MCF 10A (cell line): ENCODE measurements at regions of chr2 and their contacts with region 1.

Region 1: DNA sequence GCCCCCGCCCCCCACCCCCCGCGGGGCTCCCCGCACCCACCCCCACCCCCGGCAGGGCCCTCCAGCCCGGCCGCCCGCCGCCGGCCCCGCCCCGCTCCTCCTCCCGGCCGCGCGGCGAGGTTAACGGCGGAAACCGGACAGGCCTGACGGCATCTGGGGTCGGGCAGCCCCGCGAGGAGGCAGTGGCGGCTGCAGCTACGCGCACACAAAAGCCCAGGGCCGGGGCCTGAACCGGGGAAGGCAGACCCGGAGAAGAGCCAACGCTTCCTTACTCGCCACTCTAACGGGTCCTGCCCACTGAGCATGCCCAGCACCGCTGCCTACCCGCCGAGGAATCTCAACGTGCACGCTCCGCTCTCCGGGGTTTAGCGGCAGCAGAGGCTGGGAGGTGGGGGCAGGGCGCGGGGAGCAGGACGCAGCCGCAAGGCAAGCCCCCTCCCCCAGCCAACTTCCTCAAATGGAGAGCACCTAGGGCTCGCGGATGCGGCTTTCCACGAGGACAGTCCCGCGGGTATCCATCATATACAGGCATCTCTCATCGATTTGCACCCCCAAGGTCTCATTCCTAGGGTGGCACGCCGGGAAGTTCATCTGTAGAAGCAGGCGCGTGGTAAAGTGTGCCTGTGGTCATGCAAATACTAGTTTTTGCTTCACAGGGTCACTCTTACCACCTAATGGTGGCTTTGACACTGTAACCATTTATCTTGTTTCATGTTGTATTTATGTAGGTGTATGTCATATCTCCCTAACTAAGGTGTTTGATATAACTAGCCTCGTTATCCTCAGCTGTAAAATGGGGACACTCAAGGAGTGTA is at the start of gene MEMO1:
- DNase-seq: peak; percentile 92
- H3K4me3 Mint-ChIP-seq: peak within 1 kb of the TSS; percentile 86
- H3K27ac Mint-ChIP-seq: peak within 1 kb of the TSS; percentile 67
- H3K4me1 Mint-ChIP-seq: peaks cover 20% of the 10 kb centered on the region
- H3K27me3 Mint-ChIP-seq: no peaks in the 10 kb centered on the region
- CTCF ChIP-seq: no peak
- total RNA-seq, gene MEMO1: 43.0 and 54.6 TPM in 2 replicates

Region 2: DNA sequence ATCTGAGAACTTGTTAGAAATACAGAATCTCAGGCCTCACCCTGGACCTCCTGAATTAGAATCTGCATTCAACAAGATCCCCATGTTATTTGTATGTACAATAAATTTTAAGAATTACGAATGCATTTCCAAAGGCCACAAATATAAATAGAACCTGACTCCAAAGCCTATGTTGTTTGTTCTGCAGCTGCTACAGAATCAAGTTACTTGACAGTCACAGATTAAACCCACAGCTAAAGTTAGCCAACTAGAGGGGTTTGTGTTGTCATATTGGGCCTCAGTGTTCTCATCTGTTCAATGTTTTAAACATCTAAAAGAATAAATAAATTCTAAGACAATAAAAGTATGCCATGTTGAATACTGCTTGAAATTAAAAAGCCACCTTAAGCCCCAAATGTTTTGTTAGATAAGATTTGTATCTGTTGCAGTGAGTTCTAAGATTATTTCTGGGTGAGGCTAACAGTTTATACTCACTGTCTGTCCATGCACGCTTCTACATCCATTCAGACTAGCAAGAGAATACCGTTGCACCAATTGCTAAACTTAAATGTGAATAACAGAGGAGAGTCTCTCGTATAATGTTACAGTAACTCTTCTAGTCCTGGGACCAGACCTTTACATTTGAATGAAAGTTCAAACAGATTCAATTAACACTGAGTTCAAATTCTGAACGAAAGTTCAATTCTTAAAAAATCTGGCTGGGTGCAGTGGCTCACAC is 200.5 kb before region 1 on chr2:
- CTCF ChIA-PET with region 1: no interaction called
- POLR2A ChIA-PET with region 1: no interaction called
- intact Hi-C with region 1: no loop called
- DNase-seq: no peak
- H3K4me3 Mint-ChIP-seq: no peak overlapping the region
- H3K27ac Mint-ChIP-seq: no peak overlapping the region
- H3K4me1 Mint-ChIP-seq: no peaks in the 10 kb centered on the region
- H3K27me3 Mint-ChIP-seq: no peaks in the 10 kb centered on the region
- CTCF ChIP-seq: no peak

Region 3: DNA sequence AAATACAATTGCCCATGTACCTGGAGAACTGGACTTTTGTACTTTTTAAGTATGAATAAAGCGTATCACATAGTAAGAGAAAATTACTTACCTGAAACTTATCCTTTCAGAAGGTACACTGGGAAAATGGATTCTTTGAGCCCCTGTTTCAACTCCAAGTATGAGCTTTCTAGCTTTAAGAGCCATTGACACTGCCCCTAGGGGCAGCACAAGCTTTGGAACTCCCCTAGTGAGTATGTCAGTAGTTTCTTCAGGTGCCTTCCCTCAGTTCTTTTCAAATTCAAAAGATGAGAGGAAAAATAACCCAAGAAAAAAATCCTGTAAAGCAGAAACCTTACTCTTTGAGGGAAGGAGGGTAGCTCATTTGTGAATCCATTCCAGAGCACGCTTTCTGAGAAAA is 124.2 kb before region 1 on chr2:
- CTCF ChIA-PET with region 1: interaction called, 3 read pairs
- POLR2A ChIA-PET with region 1: no interaction called
- intact Hi-C with region 1: loop called (anchors 10 kb)
- DNase-seq: peak; percentile 27
- H3K4me3 Mint-ChIP-seq: no peak overlapping the region
- H3K27ac Mint-ChIP-seq: no peak overlapping the region
- H3K4me1 Mint-ChIP-seq: no peaks in the 10 kb centered on the region
- H3K27me3 Mint-ChIP-seq: no peaks in the 10 kb centered on the region
- CTCF ChIP-seq: peak; percentile 26

Region 4: GRCh38 chr2:31987464-31988220 is 23.2 kb before region 1 on chr2:
- CTCF ChIA-PET with region 1: interaction called, 6 read pairs
- POLR2A ChIA-PET with region 1: interaction called, 11 read pairs
- intact Hi-C with region 1: no loop called
- DNase-seq: peak; percentile 67
- H3K4me3 Mint-ChIP-seq: no peak overlapping the region
- H3K27ac Mint-ChIP-seq: no peak overlapping the region
- H3K4me1 Mint-ChIP-seq: peaks cover 17% of the 10 kb centered on the region
- H3K27me3 Mint-ChIP-seq: no peaks in the 10 kb centered on the region
- CTCF ChIP-seq: no peak

Region 5: DNA sequence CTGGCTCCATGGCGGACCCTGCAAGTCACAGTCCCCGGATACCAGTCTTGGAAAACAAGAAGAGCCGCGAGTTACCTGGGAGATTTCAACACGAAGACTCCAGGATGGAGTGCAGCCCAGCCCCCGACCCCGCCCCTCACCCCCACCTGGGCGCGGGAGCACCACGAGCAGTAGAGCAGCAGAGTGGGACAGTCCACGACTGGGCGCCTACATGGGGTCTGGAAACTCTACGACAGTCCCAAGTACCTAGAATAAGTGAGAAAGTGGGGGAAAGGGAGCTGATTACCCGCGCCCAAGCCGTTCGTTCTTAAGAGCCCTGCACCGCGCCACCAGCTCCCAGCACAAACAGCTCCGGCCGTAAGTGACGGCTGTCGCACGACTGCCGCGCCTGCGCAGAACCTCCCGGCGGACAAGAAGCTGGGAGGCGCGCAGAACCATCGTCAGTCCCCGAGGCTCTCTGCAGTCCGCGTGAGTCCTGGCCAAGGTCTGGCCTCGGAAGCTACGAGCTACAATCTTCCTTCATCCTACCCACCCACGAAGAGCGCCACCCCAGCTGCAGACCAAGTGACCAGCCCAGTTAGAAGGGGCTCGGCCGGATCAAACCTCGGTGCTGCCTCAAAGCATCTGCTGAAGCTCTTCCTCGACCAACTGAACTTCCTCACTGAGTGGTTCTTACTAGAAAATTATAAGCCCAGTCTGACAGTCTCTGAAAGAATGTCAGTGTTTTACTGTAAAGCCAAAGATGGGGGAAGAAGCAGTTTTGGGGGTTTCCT is 28.8 kb after region 1 on chr2 and contains the start of gene DPY30:
- CTCF ChIA-PET with region 1: interaction called, 3 read pairs
- POLR2A ChIA-PET with region 1: interaction called, 22 read pairs
- intact Hi-C with region 1: no loop called
- DNase-seq: peak; percentile 91
- H3K4me3 Mint-ChIP-seq: peak within 1 kb of the TSS; percentile 88
- H3K27ac Mint-ChIP-seq: peak within 1 kb of the TSS; percentile 83
- H3K4me1 Mint-ChIP-seq: no peaks in the 10 kb centered on the region
- H3K27me3 Mint-ChIP-seq: no peaks in the 10 kb centered on the region
- CTCF ChIP-seq: no peak
- total RNA-seq, gene DPY30: 52.1 and 54.7 TPM in 2 replicates

Region 6: DNA sequence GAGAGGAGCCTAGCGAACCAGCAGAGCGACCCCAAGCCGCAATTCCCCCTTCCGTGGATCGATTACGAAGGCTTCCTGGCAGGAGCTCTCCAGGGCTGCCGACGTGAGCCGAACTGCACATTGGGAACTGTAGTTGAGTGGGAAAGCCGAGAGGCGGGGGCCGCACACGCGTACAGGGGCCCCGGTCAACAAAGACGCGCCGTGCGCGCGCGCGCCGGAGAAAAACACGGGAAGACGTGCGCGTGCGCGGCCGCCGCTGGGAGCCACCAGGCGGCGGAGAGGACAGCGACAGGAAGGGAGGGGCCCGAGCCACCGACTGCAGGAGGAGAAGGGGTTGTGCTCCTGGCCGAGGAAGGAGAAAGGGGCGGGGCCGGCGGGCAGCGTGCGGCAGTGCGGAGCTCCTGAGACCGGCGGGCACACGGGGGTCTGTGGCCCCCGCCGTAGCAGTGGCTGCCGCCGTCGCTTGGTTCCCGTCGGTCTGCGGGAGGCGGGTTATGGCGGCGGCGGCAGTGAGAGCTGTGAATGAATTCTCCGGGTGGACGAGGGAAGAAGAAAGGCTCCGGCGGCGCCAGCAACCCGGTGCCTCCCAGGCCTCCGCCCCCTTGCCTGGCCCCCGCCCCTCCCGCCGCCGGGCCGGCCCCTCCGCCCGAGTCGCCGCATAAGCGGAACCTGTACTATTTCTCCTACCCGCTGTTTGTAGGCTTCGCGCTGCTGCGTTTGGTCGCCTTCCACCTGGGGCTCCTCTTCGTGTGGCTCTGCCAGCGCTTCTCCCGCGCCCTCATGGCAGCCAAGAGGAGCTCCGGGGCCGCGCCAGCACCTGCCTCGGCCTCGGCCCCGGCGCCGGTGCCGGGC is 52.7 kb after region 1 on chr2 and contains the start of gene SPAST:
- CTCF ChIA-PET with region 1: interaction called, 7 read pairs
- POLR2A ChIA-PET with region 1: interaction called, 27 read pairs
- intact Hi-C with region 1: loop called (anchors 2 kb)
- DNase-seq: peak; percentile 97
- H3K4me3 Mint-ChIP-seq: peak within 1 kb of the TSS; percentile 98
- H3K27ac Mint-ChIP-seq: peak within 1 kb of the TSS; percentile 94
- H3K4me1 Mint-ChIP-seq: peaks cover 16% of the 10 kb centered on the region
- H3K27me3 Mint-ChIP-seq: no peaks in the 10 kb centered on the region
- CTCF ChIP-seq: peak; percentile 18
- total RNA-seq, gene SPAST: 20.4 and 23.8 TPM in 2 replicates

Region 7: GRCh38 chr2:32135409-32135808 is 124.5 kb after region 1 on chr2:
- CTCF ChIA-PET with region 1: no interaction called
- POLR2A ChIA-PET with region 1: no interaction called
- intact Hi-C with region 1: loop called (anchors 10 kb)
- DNase-seq: peak; percentile 67
- H3K4me3 Mint-ChIP-seq: no peak overlapping the region
- H3K27ac Mint-ChIP-seq: no peak overlapping the region
- H3K4me1 Mint-ChIP-seq: no peaks in the 10 kb centered on the region
- H3K27me3 Mint-ChIP-seq: no peaks in the 10 kb centered on the region
- CTCF ChIP-seq: no peak